H1 (cell line): ENCODE measurements at regions of chr19 and their contacts with region 1.

Region 1: DNA sequence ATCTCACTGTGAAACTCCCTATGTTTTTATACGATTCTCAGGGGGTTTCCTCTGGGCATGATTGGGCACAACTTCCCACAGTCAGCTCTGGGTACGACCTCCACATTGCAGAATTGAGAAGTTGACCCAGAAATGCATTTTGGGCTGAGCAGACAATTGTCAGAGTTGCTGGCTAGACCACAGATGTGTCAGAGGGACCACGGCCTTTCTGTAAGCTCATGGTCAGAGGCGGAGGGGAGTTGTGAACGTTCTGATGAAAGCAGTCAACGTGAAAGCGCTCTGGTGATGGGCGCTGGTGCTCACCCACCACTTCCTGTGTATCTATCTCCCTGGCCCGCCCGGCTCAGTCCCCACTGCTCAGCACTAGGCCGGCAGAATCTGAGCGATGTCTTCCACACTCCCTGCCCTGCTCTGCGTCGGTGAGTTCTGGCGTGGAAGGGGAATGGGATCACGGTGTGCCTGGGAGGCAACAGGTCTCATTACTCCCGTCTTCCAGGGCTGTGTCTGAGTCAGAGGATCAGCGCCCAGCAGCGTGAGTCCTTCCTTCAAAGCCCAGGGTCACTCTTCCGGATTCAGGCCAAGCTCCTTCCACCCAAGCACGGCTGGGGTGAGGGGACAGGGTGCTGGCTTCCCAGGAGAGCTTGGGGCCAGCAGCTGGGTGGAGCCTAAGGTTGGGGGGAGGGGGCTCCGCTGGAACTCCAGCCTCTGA is at the start of gene NCR1:
- DNase-seq: no peak
- H3K4me3 ChIP-seq: no peak within 1 kb of the TSS
- H3K27ac ChIP-seq: no peak within 1 kb of the TSS
- H3K4me1 ChIP-seq: peaks cover 2 to 10% (median 5%) of the 10 kb centered on the region in 4 experiments; a peak in 4 of 7 replicates
- H3K27me3 ChIP-seq: no peaks in the 10 kb centered on the region
- CTCF ChIP-seq: no peak
- EP300 ChIP-seq: no peak
- POLR2A ChIP-seq: no peak
- RAD21 ChIP-seq: no peak
- total RNA-seq, gene NCR1: 4.6 and 5.1 TPM in 2 replicates

Region 2: DNA sequence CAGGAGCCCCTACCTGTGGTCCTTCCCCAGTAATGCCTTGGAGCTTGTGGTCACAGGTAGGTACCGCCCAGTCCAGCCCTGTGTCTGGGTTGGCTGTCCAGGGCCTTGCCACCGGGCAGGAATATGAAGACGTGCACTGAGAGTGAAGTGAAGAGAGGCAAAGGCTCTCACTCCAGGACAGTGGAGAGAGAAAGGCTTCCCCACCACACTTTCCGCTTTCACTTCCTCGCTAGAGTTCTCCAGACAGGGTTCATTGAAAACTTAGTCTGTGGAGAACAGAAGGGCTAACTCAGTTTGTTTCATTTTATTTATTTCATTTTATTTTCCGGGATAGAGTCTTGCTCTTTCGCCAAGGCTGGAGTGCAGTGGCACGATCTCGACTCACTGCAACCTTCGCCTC is 17.7 kb before region 1 on chr19:
- CTCF ChIA-PET with region 1: interaction called, 11 read pairs
- POLR2A ChIA-PET with region 1: interaction called, 8 read pairs
- DNase-seq: no peak
- H3K4me3 ChIP-seq: no peak overlapping the region
- H3K27ac ChIP-seq: 0 out of 2 replicates have a peak overlapping the region, but pooled peaks have one; percentile 45
- H3K4me1 ChIP-seq: peaks cover 0 to 4% (median 0%) of the 10 kb centered on the region in 4 experiments; a peak in 2 of 7 replicates
- H3K27me3 ChIP-seq: 0 out of 7 replicates have a peak, but pooled peaks cover 0 to 2% (median 0%) of the 10 kb centered on the region in 4 experiments
- CTCF ChIP-seq: no peak
- EP300 ChIP-seq: no peak
- POLR2A ChIP-seq: no peak
- RAD21 ChIP-seq: no peak

Region 3: DNA sequence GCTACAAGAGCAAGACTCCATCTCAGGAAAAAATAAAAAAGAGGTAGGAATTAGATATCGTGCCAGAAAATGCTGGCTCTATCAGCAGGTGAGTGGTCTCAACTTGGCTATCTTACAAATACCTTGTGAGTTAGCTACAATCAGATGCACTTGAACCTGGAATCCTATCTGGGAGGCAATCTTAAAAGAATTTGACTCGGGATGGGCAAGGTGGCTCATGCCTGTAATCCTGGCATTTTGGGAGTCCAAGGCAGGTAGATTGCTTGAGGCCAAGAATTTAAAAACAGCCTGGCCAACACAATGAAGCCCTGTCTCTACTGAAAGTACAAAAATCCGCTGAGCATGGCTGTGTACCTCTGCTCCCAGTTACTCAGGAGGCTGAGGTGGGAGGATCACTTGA is 89.6 kb after region 1 on chr19:
- CTCF ChIA-PET with region 1: no interaction called
- POLR2A ChIA-PET with region 1: no interaction called
- DNase-seq: no peak
- H3K4me3 ChIP-seq: no peak overlapping the region
- H3K27ac ChIP-seq: no peak overlapping the region
- H3K4me1 ChIP-seq: no peaks in the 10 kb centered on the region
- H3K27me3 ChIP-seq: peaks cover 0 to 2% (median 0%) of the 10 kb centered on the region in 4 experiments; a peak in 3 of 7 replicates
- CTCF ChIP-seq: no peak
- EP300 ChIP-seq: no peak
- POLR2A ChIP-seq: no peak
- RAD21 ChIP-seq: no peak